SK-N-SH (cell line): ENCODE measurements at regions of chr11 and their contacts with region 1.

Region 1: GRCh38 chr11:20355221-20356219 is 8.0 kb upstream of the HTATIP2 start:
- DNase-seq: peak; percentile 56
- H3K4me3 ChIP-seq: no peak overlapping the region; a peak in 1 of 4 replicates
- H3K27ac ChIP-seq: no peak overlapping the region
- H3K4me1 ChIP-seq: no peaks in the 10 kb centered on the region; a peak in 1 of 4 replicates
- H3K27me3 ChIP-seq: no peaks in the 10 kb centered on the region
- CTCF ChIP-seq: peak; percentile 72
- EP300 ChIP-seq: no peak
- RAD21 ChIP-seq: peak; percentile 60

Region 2: GRCh38 chr11:19951558-19952115 is 403.9 kb before region 1 on chr11:
- CTCF ChIA-PET with region 1: interaction called, 11 read pairs
- POLR2A ChIA-PET with region 1: no interaction called
- DNase-seq: peak; percentile 42
- H3K4me3 ChIP-seq: no peak overlapping the region; a peak in 1 of 4 replicates
- H3K27ac ChIP-seq: peak overlapping the region; percentile 83 to 91
- H3K4me1 ChIP-seq: peaks cover 45 to 49% of the 10 kb centered on the region in 2 experiments
- H3K27me3 ChIP-seq: no peaks in the 10 kb centered on the region
- CTCF ChIP-seq: peak; percentile 72
- EP300 ChIP-seq: no peak
- RAD21 ChIP-seq: peak; percentile 77

Region 3: GRCh38 chr11:20134991-20135736 is 220.4 kb before region 1 on chr11:
- CTCF ChIA-PET with region 1: interaction called, 302 read pairs
- POLR2A ChIA-PET with region 1: no interaction called
- DNase-seq: no peak
- H3K4me3 ChIP-seq: no peak overlapping the region
- H3K27ac ChIP-seq: no peak overlapping the region
- H3K4me1 ChIP-seq: no peaks in the 10 kb centered on the region
- H3K27me3 ChIP-seq: no peaks in the 10 kb centered on the region
- CTCF ChIP-seq: no peak
- EP300 ChIP-seq: no peak
- RAD21 ChIP-seq: no peak

Region 4: GRCh38 chr11:20162824-20163782 is 192.4 kb before region 1 on chr11:
- CTCF ChIA-PET with region 1: interaction called, 38 read pairs
- POLR2A ChIA-PET with region 1: no interaction called
- DNase-seq: peak; percentile 64
- H3K4me3 ChIP-seq: peak overlapping the region; percentile 26 to 28; a peak in 3 of 4 replicates
- H3K27ac ChIP-seq: no peak overlapping the region
- H3K4me1 ChIP-seq: peaks cover 0 to 16% of the 10 kb centered on the region in 2 experiments; a peak in 2 of 4 replicates
- H3K27me3 ChIP-seq: peaks cover 61% of the 10 kb centered on the region
- CTCF ChIP-seq: no peak
- EP300 ChIP-seq: no peak
- RAD21 ChIP-seq: no peak

Region 5: DNA sequence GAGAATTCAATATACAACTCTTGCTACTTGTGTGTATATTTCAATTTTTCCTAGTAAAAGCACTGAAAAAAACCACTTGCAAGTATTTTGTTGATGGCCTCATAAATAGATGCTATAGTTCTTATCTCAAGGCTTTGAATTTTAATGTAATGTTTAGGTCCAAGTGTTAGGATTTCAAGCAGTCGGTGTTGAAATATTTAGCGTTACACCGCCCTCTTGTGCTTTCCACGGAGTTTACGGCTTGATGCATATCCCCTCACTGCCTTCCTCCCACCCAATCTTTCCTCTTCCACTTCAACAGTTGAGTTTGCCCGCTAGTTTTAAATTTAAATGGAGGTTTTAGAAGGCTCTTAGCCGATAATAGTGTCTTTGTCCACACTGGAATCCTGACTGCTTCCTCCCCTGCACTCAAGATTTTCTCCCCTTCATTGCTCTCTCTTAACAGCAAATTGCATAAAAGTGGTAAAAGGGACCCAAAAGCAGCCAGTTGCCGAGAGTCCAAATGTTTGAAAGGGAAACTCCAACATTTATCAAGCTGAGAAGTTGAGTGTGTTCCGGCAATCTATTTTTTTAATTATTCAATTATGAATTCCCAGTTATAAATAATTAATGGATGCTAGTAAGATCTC is 17.9 kb before region 1 on chr11:
- CTCF ChIA-PET with region 1: interaction called, 115 read pairs
- POLR2A ChIA-PET with region 1: no interaction called
- DNase-seq: peak; percentile 74
- H3K4me3 ChIP-seq: no peak overlapping the region; a peak in 1 of 4 replicates
- H3K27ac ChIP-seq: no peak overlapping the region
- H3K4me1 ChIP-seq: peaks cover 0 to 3% of the 10 kb centered on the region in 2 experiments; a peak in 1 of 4 replicates
- H3K27me3 ChIP-seq: peaks cover 4% of the 10 kb centered on the region; the same call in 1 of the 2 replicates
- CTCF ChIP-seq: peak; percentile 62
- EP300 ChIP-seq: no peak
- RAD21 ChIP-seq: peak; percentile 92

Region 6: DNA sequence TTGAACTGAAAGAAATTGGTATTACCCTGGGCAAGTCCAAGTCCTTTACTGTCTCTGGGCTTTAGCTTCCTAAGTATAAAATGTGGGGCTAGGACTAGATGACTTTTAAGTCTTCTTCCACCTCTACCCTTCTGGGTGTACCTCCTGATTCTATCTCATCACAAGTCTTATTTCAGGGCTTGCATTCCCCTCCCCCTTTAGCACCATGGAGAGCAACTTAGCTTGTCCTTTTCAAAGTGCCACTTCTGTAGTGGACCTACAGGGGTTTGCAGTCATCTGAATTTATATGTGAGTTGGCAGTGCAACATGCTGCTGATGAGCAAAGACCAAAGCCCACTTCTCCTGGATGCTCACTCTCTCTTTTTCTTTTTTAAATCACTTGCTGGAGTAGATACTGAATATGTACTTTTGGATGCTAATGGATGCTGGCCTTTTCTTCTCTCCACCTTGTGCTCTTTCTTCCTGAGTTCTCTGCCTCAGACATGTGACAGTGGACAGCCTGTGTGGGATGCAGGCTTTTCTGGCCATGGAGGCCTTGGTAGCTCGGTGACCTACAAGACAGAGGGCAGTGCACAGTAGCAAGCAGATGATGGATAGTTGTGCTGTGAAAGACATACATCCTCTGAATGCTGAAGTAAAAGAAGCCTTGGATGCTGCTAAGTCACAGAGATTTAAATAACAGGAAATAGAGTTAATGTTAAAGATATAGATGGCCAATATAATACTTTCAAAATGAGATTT is 498.9 kb after region 1 on chr11:
- CTCF ChIA-PET with region 1: no interaction called
- POLR2A ChIA-PET with region 1: no interaction called
- DNase-seq: no peak
- H3K4me3 ChIP-seq: no peak overlapping the region
- H3K27ac ChIP-seq: no peak overlapping the region
- H3K4me1 ChIP-seq: no peaks in the 10 kb centered on the region; a peak in 1 of 4 replicates
- H3K27me3 ChIP-seq: no peaks in the 10 kb centered on the region
- CTCF ChIP-seq: no peak
- EP300 ChIP-seq: no peak
- RAD21 ChIP-seq: no peak